ENCODE measurements at regions of chr7 and their contacts with region 1.

Region 1: DNA sequence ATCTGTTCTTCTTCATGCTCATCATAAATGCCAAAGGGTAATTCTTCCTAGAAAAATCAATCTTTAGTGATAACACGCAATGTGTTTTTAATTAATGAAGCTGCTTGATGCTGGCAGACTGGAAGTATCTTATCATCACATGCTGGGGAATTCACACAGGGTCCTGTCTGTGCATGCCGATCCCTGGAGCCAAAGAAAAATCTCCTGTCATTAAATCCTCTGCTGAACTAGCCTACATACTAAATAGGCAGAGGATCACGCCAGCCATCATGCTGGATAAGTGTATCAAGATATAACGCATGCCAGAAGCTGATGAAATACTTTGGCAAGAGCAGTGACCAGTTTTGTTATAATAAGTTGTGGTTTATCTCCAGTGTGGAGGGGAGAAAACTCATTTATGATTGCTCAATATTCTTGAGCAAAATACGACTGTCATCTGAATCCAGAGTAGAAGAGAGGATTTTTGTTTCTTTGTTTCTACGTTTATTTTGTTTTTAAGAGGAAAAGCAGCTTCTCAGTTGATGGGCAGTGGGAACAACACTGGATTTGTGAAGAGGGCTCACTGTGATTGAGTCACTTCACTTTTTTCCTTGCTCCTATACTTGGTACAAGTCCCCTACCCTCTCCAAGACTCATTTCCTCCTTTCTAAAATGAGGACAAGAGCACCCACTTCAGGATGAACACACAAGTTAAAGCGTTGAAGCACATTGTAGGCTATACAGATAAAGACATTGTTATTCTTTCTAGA is 649.1 kb downstream of the TNS3 start:
- DNase-seq: no peak

Region 2: GRCh38 chr7:47045207-47046051 is 112.6 kb after region 1 on chr7:
- intact Hi-C with region 1: loop called (anchors 10 kb)
- DNase-seq: no peak